ENCODE measurements at regions of chr16 and their contacts with region 1.

Region 1: DNA sequence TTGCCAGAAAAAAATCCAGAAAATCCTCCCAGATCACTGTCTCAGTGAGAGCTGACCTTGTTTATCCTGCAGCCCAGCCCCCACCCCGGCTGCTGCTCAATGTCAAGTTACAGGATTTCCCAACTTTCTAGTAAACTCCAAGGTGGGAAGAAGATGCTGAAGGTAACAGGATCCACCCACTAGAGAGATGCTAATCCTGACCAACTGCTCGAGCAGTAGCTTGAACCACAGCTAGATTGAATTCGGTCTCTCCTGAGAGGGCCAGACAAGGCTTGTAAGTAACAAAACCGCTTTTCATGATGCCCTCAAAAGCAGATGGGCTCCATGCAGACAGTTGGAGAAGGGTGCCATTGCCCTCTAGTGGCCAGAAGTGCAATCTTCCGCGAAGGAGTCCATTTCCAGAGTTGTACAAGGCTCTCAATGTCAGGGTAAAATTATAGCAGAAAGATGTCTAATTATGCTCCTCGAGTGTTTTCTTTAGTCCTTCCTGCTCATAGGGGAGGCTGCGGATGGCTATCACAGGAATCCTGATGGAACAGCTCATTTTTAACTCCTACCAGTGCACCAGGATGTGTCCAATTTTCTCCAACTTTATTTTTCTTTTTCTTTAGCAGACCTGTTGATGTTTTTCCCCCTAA is 3.9 kb downstream of the CDH11 start:
- DNase-seq: peak; percentile 62
- H3K4me3 ChIP-seq: no peak overlapping the region
- H3K27ac ChIP-seq: no peak overlapping the region
- H3K4me1 ChIP-seq: peaks cover 5% of the 10 kb centered on the region
- H3K27me3 ChIP-seq: no peaks in the 10 kb centered on the region
- CTCF ChIP-seq: peak; percentile 50 to 81 (median 78)
- POLR2A ChIP-seq: no peak

Region 2: DNA sequence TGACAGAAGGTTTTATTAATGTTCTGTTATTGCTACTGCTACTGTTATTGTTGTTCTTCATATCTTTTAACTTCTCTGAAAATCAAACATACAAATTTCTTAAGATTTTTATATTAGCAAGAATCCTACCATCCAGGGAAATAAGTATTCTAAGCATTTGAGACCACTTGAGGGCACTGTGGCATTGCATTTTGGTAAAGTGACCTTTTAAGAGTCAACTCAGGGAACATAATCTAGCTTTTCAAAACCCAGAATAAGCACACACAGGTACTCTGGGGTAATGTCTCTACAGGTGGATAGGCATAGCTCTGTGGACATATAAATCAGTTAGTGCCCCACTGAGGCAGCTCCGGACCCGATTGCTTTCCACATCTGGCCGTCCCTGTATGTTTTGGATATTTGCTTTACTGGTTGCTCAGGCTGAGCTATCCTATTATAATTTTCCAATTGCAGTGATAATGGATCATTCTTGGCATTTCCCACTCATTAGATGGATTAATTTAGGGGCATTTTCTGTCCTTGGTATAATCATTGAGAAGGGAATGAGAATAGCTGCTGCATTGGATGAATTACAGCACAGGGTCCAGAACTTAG is 1656.6 kb before region 1 on chr16:
- intact Hi-C with region 1: loop called (anchors 10 kb)
- DNase-seq: peak; percentile 7
- H3K4me3 ChIP-seq: no peak overlapping the region
- H3K27ac ChIP-seq: no peak overlapping the region
- H3K4me1 ChIP-seq: no peaks in the 10 kb centered on the region
- H3K27me3 ChIP-seq: no peaks in the 10 kb centered on the region
- CTCF ChIP-seq: peak in 3 of 4 experiments; percentile 24 to 61 (median 59)
- POLR2A ChIP-seq: no peak

Region 3: GRCh38 chr16:64089697-64090096 is 1028.2 kb before region 1 on chr16:
- intact Hi-C with region 1: loop called (anchors 10 kb)
- DNase-seq: no peak
- H3K4me3 ChIP-seq: no peak overlapping the region
- H3K27ac ChIP-seq: no peak overlapping the region
- H3K4me1 ChIP-seq: no peaks in the 10 kb centered on the region
- H3K27me3 ChIP-seq: no peaks in the 10 kb centered on the region
- CTCF ChIP-seq: peak in 2 of 4 experiments; percentile 11 to 27
- POLR2A ChIP-seq: no peak

Region 4: DNA sequence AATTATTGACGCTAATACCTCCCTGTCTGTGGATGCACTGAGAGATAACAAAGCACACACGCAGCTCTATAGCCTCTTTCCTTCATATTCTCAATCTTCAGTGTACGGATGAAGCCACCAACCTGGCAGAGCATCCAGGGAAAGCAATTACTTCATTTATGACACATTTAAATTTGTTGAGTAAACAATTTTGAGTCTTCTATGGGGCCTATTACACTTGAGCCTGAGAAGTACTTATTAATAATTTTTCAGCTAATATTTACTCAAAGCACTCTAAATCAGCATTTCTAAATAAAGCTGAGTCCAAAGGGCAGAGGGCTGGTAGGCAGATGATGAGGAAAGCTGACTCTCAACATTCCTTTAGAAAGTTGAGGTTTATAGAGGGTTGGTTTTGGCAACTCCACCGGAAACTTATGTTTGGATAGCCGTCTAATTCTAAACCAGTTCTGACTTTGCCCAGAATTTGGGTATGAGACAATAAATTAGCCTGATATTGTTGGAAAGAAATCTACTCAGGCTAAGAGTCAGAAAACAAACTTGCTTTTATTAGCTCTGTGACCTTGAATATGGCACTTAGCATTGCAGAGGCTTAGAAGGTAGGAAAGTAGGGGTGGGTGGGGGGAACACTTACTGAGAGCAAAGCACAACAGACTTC is 639.6 kb before region 1 on chr16:
- intact Hi-C with region 1: loop called (anchors 10 kb)
- DNase-seq: peak; percentile 51
- H3K4me3 ChIP-seq: no peak overlapping the region
- H3K27ac ChIP-seq: no peak overlapping the region
- H3K4me1 ChIP-seq: no peaks in the 10 kb centered on the region
- H3K27me3 ChIP-seq: no peaks in the 10 kb centered on the region
- CTCF ChIP-seq: no peak
- POLR2A ChIP-seq: no peak

Region 5: GRCh38 chr16:65068151-65068740 is 49.7 kb before region 1 on chr16:
- intact Hi-C with region 1: loop called (anchors 2 kb)
- DNase-seq: no peak
- H3K4me3 ChIP-seq: no peak overlapping the region
- H3K27ac ChIP-seq: no peak overlapping the region
- H3K4me1 ChIP-seq: no peaks in the 10 kb centered on the region
- H3K27me3 ChIP-seq: no peaks in the 10 kb centered on the region
- CTCF ChIP-seq: no peak
- POLR2A ChIP-seq: no peak

Region 6: GRCh38 chr16:65268331-65268730 is 150.4 kb after region 1 on chr16:
- intact Hi-C with region 1: no loop called
- DNase-seq: no peak
- H3K4me3 ChIP-seq: no peak overlapping the region
- H3K27ac ChIP-seq: no peak overlapping the region
- H3K4me1 ChIP-seq: no peaks in the 10 kb centered on the region
- H3K27me3 ChIP-seq: no peaks in the 10 kb centered on the region
- CTCF ChIP-seq: no peak
- POLR2A ChIP-seq: no peak

Region 7: DNA sequence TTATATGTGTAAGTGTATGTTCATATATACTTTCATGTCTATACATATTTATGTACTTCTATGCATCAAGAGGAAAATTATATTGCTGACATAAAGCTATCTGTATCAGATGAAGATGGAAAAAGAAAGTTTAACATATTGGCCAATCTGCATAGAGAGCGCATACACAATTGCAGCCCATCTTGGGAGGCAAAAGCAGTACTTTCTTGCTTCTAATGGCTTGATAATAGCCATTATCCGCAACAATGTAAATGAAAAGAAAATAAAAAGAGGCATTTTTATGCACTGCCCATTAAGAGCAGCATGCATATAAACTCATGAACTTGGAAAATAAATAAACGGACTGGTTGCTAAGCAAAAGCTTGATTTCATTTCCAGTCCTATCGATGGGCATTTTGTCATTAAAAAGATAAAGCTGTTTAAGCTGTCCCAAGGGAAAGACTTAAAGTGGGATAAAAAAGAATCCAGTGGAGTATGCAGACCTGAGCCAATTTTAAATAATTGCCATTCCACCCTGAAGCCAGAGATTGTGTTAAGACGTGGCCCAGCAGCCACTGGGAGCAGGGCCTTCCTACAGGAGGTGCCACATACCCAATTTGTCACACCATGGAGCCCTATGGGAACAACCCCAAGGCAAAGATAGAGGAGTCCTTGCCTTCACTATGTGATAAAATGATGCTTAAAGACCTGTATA is 187.5 kb after region 1 on chr16:
- intact Hi-C with region 1: loop called (anchors 10 kb)
- DNase-seq: no peak
- H3K4me3 ChIP-seq: no peak overlapping the region
- H3K27ac ChIP-seq: no peak overlapping the region
- H3K4me1 ChIP-seq: no peaks in the 10 kb centered on the region
- H3K27me3 ChIP-seq: no peaks in the 10 kb centered on the region
- CTCF ChIP-seq: no peak
- POLR2A ChIP-seq: no peak

Region 8: GRCh38 chr16:66270333-66270927 is 1152.5 kb after region 1 on chr16:
- intact Hi-C with region 1: loop called (anchors 5 kb)
- DNase-seq: peak; percentile 10
- H3K4me3 ChIP-seq: peak overlapping the region; percentile 11 to 16
- H3K27ac ChIP-seq: peak overlapping the region in 1 of 2 donors; percentile 24
- H3K4me1 ChIP-seq: no peaks in the 10 kb centered on the region
- H3K27me3 ChIP-seq: no peaks in the 10 kb centered on the region
- CTCF ChIP-seq: peak; percentile 86 to 98 (median 94)
- POLR2A ChIP-seq: no peak

Measured in prostate gland (tissue), 2 donors.